SK-N-SH (cell line): ENCODE measurements at regions of chr3 and their contacts with region 1.

Region 1: GRCh38 chr3:161274719-161275298 is 53.7 kb downstream of the NMD3 start:
- DNase-seq: peak; percentile 27
- H3K4me3 ChIP-seq: peak overlapping the region in 1 of 2 experiments; percentile 23; a peak in 1 of 4 replicates
- H3K27ac ChIP-seq: no peak overlapping the region
- H3K4me1 ChIP-seq: peaks cover 0 to 3% of the 10 kb centered on the region in 2 experiments; a peak in 1 of 4 replicates
- H3K27me3 ChIP-seq: no peaks in the 10 kb centered on the region
- CTCF ChIP-seq: peak; percentile 82
- EP300 ChIP-seq: no peak
- RAD21 ChIP-seq: peak; percentile 62

Region 2: GRCh38 chr3:161284989-161285388 is 10.2 kb after region 1 on chr3:
- CTCF ChIA-PET with region 1: interaction called, 13 read pairs
- POLR2A ChIA-PET with region 1: no interaction called
- DNase-seq: no peak
- H3K4me3 ChIP-seq: no peak overlapping the region
- H3K27ac ChIP-seq: no peak overlapping the region
- H3K4me1 ChIP-seq: no peaks in the 10 kb centered on the region
- H3K27me3 ChIP-seq: no peaks in the 10 kb centered on the region
- CTCF ChIP-seq: no peak
- EP300 ChIP-seq: no peak
- RAD21 ChIP-seq: no peak

Region 3: GRCh38 chr3:161420769-161421168 is 146.0 kb after region 1 on chr3:
- CTCF ChIA-PET with region 1: interaction called, 22 read pairs
- POLR2A ChIA-PET with region 1: no interaction called
- DNase-seq: no peak
- H3K4me3 ChIP-seq: no peak overlapping the region
- H3K27ac ChIP-seq: no peak overlapping the region
- H3K4me1 ChIP-seq: peaks cover under 1 to 14% of the 10 kb centered on the region in 2 experiments; a peak in 3 of 4 replicates
- H3K27me3 ChIP-seq: no peaks in the 10 kb centered on the region
- CTCF ChIP-seq: no peak
- EP300 ChIP-seq: no peak
- RAD21 ChIP-seq: no peak